ENCODE measurements at regions of chr4 and their contacts with region 1.

Region 1: GRCh38 chr4:153344131-153345010 is at the start of gene MND1:
- DNase-seq: peak; percentile 85 to 94 (median 90)
- ATAC-seq: peak; percentile 92
- H3K4me3 ChIP-seq: peak within 1 kb of the TSS; percentile 80
- H3K4me3 Mint-ChIP-seq: peak within 1 kb of the TSS; percentile 93
- H3K27ac ChIP-seq: no peak within 1 kb of the TSS
- H3K27ac Mint-ChIP-seq: peak within 1 kb of the TSS; percentile 57
- H3K4me1 ChIP-seq: peaks cover 4% of the 10 kb centered on the region
- H3K4me1 Mint-ChIP-seq: peaks cover 13% of the 10 kb centered on the region
- H3K27me3 ChIP-seq: no peaks in the 10 kb centered on the region
- H3K27me3 Mint-ChIP-seq: peaks cover 7% of the 10 kb centered on the region
- CTCF ChIP-seq: peak; percentile 98
- total RNA-seq, gene MND1: 0.42 TPM in 1 of 2 experiments, not detected in the other

Region 2: GRCh38 chr4:153426207-153426885 is 82.0 kb after region 1 on chr4:
- CTCF ChIA-PET with region 1: no interaction called
- POLR2A ChIA-PET with region 1: interaction called, 11 read pairs
- intact Hi-C with region 1: no loop called
- DNase-seq: peak in 5 of 14 experiments; percentile 10 to 74 (median 68)
- ATAC-seq: peak; percentile 73
- H3K4me3 ChIP-seq: no peak overlapping the region
- H3K4me3 Mint-ChIP-seq: peak overlapping the region; percentile 50
- H3K27ac ChIP-seq: peak overlapping the region; percentile 58 to 61
- H3K27ac Mint-ChIP-seq: peak overlapping the region; percentile 96
- H3K4me1 ChIP-seq: peaks cover 44% of the 10 kb centered on the region
- H3K4me1 Mint-ChIP-seq: peaks cover 57% of the 10 kb centered on the region
- H3K27me3 ChIP-seq: no peaks in the 10 kb centered on the region
- H3K27me3 Mint-ChIP-seq: no peaks in the 10 kb centered on the region
- CTCF ChIP-seq: no peak

Region 3: GRCh38 chr4:153573881-153574802 is 229.8 kb after region 1 on chr4:
- CTCF ChIA-PET with region 1: interaction called, 15 read pairs
- POLR2A ChIA-PET with region 1: interaction called, 25 read pairs
- intact Hi-C with region 1: loop called (anchors 1 kb)
- DNase-seq: peak; percentile 47 to 83 (median 65)
- ATAC-seq: peak; percentile 97
- H3K4me3 ChIP-seq: no peak overlapping the region
- H3K4me3 Mint-ChIP-seq: peak overlapping the region; percentile 25
- H3K27ac ChIP-seq: peak overlapping the region; percentile 1 to 32
- H3K27ac Mint-ChIP-seq: peak overlapping the region; percentile 57
- H3K4me1 ChIP-seq: peaks cover 37% of the 10 kb centered on the region
- H3K4me1 Mint-ChIP-seq: peaks cover 85% of the 10 kb centered on the region
- H3K27me3 ChIP-seq: no peaks in the 10 kb centered on the region
- H3K27me3 Mint-ChIP-seq: no peaks in the 10 kb centered on the region
- CTCF ChIP-seq: peak; percentile 78

Region 4: DNA sequence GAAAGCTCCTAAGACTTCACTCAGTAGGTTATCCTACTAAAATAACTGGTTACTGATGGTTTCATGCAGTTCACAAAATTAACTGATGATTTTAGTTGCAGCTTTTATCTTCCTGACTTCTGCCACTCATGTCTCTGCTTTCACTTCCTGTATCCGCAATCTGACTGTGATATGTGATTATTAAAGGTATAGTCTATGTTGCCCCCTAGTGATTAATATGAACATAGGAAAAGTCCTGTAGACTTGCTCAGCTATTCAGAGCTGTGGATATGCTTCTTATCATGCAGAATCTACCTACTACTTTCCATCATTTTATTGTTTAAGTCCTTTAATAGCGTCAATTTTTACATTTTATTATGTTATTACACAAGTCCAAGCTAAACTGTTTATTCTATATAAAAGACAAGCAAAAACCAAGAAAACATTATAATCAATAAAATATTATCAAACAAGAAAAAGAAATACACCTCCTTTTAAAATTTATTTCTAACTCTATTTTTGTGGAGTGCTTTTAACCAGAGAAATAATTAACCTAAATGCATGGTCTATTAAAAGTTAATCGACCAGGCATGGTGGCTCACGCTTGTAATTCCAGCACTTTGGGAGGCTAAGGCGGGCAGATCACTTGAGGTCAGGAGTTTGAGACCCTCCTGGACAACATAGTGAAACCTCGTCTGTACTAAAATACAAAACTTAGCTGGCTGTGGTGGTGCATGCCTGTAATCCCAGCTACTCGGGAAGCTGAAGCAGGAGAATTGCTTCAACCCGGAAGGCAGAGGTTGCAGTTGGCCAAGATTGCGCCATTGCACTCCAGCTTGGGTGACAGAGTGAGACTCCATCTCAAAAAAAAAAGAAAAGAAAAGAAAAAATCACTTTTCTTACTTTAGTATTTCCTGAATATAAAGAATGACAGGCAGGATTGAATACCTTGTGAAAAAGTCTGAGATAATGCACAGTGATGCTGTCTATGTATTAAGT is 299.3 kb after region 1 on chr4:
- CTCF ChIA-PET with region 1: interaction called, 6 read pairs
- POLR2A ChIA-PET with region 1: no interaction called
- intact Hi-C with region 1: loop called in 1 of 2 experiments (anchors 2 kb)
- DNase-seq: peak in 3 of 14 experiments; percentile 72 to 81 (median 77)
- ATAC-seq: peak; percentile 99
- H3K4me3 ChIP-seq: no peak overlapping the region
- H3K4me3 Mint-ChIP-seq: no peak overlapping the region
- H3K27ac ChIP-seq: peak overlapping the region in 1 of 2 donors; percentile 18
- H3K27ac Mint-ChIP-seq: no peak overlapping the region
- H3K4me1 ChIP-seq: peaks cover 7% of the 10 kb centered on the region
- H3K4me1 Mint-ChIP-seq: peaks cover 21% of the 10 kb centered on the region
- H3K27me3 ChIP-seq: no peaks in the 10 kb centered on the region
- H3K27me3 Mint-ChIP-seq: no peaks in the 10 kb centered on the region
- CTCF ChIP-seq: peak; percentile 65

Region 5: GRCh38 chr4:153750197-153750817 is 405.9 kb after region 1 on chr4:
- CTCF ChIA-PET with region 1: no interaction called
- POLR2A ChIA-PET with region 1: no interaction called
- intact Hi-C with region 1: loop called (anchors 1 to 5 kb)
- DNase-seq: peak; percentile 26 to 78 (median 50)
- ATAC-seq: peak; percentile 80
- H3K4me3 ChIP-seq: no peak overlapping the region
- H3K4me3 Mint-ChIP-seq: no peak overlapping the region
- H3K27ac ChIP-seq: no peak overlapping the region
- H3K27ac Mint-ChIP-seq: no peak overlapping the region
- H3K4me1 ChIP-seq: peaks cover 6% of the 10 kb centered on the region
- H3K4me1 Mint-ChIP-seq: peaks cover 13% of the 10 kb centered on the region
- H3K27me3 ChIP-seq: peaks cover 0 to 4% of the 10 kb centered on the region in 2 experiments
- H3K27me3 Mint-ChIP-seq: peaks cover 4% of the 10 kb centered on the region
- CTCF ChIP-seq: peak; percentile 83

Measured in CD4-positive, alpha-beta T cell (primary cell).